Left colon (tissue), 2 donors: ENCODE measurements at regions of chr7 and their contacts with region 1.

Region 1: DNA sequence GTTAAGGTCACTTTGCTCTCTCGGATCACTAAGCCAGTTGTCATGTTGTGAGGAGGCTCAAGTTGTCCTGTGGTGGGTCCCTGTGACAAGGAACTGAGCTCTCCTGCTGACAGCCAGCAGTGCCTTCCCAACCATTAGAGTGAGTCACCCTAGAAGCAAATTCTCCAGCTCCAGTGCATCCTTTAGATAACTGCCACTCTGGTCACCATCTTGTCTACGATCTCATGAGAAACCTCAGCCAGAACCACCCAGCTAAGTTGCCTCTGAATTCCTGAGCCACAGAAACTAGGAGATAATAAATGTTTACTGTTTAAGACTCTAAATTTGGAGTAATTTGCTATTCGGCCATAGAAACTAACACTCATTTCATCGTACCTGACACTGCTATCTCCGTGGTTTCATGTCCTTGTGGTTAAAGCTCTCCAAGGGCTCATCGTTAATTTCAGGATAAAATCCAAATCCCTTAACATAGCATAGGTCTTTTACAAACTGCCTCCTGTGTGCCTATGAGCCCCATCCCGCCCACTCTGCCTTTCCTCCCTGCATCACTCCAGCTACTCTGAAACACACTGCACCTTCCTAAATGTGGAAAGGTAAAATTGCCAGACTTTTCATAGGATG is 56.5 kb upstream of the WIPF3 start:
- DNase-seq: no peak
- ATAC-seq: no peak

Region 2: DNA sequence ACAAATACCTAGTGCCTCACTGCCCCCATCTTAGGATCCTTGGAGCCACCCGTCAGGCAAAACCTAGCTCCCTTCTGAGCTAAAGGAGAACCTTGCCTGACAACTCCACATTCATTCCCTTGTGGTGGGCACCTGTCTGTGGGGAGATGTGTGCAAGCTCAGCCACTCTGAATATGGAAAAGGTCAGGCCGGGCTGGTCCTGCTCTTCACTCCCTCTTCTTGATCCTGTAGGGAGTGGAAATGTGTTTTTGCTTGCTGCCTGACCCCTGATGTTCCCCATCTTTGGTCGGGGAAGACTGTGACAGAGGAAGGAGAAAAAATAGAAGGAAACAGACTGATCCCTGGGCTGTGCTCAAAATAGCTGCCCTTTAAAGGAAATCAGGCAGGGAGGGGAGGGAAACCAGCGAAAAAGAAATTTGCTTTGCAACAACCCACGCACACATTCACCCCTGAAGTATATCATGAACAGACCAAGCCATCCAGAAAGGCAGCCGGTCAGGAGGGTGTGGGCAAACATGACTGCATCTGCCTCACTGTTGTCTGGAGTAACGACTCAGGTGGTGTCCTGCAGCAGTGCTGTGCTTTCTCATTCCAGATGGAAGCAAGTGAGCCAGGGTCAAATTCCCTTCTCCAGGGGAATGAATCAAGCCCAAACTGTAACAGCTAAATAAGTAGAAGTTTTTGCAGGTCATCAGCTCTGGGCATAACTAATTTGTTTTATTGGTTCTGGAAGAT is 165.8 kb after region 1 on chr7:
- intact Hi-C with region 1: loop called in 1 of 2 experiments (anchors 10 kb)
- DNase-seq: no peak
- ATAC-seq: no peak

Region 3: DNA sequence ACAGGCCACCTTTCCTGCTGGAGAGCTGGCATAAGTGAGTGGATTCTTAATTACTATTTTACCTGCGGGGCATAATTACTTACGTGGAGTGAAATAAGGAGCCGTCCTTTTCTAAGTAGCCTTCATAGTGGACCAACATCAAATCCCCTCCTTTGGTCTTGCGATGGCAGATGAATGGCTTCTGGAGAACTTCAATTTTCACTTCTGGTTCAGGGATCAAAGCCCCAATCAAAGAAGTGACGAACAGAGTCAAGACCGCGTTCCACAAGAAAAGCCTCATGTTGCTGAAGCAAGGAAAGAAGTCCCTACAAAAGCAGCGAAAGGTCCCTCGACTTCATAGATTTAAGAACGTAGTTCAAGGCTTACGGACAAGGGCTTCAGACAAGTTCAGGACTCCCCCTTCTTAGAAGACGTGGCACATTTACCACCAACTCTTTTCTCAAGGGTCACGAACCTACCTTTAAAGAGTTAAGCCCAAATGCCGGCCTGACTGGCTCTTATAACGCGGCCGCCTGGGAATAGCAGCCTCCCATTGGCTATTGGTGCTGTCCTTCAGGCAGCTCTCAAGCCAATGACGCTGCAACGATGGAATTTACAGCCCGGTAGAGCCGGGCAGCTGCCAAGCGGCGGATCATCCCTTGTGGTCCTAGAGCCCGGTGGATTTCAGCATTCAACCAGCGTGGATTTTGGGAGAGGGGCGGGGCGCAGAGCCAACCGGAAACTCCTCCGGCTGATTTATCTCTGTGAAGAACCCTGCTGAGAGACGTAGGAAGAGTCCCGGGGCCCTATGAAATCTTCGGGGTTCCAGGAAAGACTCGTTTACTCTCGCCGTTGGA is 276.6 kb after region 1 on chr7 and contains the start of gene FKBP14:
- intact Hi-C with region 1: no loop called
- DNase-seq: peak; percentile 95 to 99
- ATAC-seq: peak; percentile 84
- total RNA-seq, gene FKBP14: 8.8 to 10.3 TPM